ENCODE measurements at regions of chr3 and their contacts with region 1.

Region 1: GRCh38 chr3:120245386-120245785 is 39.6 kb downstream of the GPR156 start:
- DNase-seq: no peak
- ATAC-seq: no peak
- H3K4me3 ChIP-seq: no peak overlapping the region
- H3K4me3 Mint-ChIP-seq: no peak overlapping the region
- H3K27ac ChIP-seq: no peak overlapping the region
- H3K27ac Mint-ChIP-seq: no peak overlapping the region
- H3K4me1 ChIP-seq: no peaks in the 10 kb centered on the region
- H3K4me1 Mint-ChIP-seq: no peaks in the 10 kb centered on the region
- H3K27me3 ChIP-seq: no peaks in the 10 kb centered on the region
- H3K27me3 Mint-ChIP-seq: peaks cover 38% of the 10 kb centered on the region
- CTCF ChIP-seq: no peak

Region 2: DNA sequence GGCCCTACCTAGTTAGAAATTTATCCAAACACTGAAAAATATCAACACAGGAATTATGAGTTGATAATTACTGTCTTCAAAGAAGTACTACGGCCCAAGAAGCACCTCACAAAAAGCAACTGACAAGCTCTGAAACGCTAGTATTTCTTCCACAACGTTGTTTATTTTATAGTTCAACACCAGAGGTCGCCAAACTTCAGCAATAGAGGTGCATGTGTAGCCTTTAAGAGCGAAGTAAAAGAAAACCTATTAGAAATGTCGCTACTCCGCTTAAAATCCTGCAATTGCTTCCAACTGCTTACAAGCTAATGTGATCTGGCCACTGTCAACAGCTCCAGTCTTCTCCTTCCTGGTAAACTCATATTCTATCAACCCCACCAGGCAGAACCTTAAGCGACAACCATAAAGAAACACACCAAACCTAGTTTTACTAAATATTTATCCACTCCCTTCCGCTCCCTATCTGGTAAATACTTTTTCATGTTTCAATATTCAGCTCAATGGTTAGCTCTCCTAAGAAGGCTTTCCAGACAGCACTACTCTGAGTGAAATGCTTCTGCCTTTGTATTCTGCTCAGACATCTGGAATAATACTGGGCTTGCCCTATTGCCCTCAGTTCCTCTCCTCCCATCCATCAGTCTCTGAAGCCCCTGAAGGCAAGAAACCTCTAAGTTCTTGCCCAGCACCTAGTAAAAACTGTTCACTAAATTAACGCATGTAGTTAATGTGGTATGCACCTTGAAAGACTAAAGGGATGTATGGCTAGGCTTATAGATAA is 353.3 kb before region 1 on chr3:
- CTCF ChIA-PET with region 1: no interaction called
- POLR2A ChIA-PET with region 1: no interaction called
- intact Hi-C with region 1: loop called (anchors 1 to 5 kb)
- DNase-seq: peak in 13 of 14 experiments; percentile 2 to 79 (median 20)
- ATAC-seq: peak; percentile 81
- H3K4me3 ChIP-seq: no peak overlapping the region
- H3K4me3 Mint-ChIP-seq: no peak overlapping the region
- H3K27ac ChIP-seq: no peak overlapping the region
- H3K27ac Mint-ChIP-seq: peak overlapping the region; percentile 53
- H3K4me1 ChIP-seq: no peaks in the 10 kb centered on the region
- H3K4me1 Mint-ChIP-seq: peaks cover 20% of the 10 kb centered on the region
- H3K27me3 ChIP-seq: no peaks in the 10 kb centered on the region
- H3K27me3 Mint-ChIP-seq: no peaks in the 10 kb centered on the region
- CTCF ChIP-seq: peak; percentile 84

Region 3: DNA sequence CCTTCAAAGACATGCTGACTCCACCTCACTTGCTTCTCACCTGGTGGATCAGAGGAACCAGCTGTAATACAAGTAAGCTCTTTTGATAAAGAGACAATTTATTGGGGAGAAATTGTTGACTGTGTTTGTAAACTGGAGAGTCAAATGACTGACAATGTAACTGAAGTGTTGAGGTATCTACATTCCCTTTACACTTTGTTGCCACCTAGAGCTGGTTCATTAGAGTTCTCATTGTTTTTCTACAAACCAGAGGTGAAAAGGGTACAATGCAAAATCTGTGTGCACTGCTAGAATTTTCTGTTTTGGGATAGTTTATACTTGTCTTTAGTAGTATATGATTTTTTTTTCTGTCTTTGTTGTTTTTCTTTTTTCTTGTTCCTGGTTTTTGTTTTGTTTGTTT is 112.4 kb after region 1 on chr3:
- CTCF ChIA-PET with region 1: interaction called, 4 read pairs
- POLR2A ChIA-PET with region 1: no interaction called
- intact Hi-C with region 1: loop called (anchors 2 to 10 kb)
- DNase-seq: peak in 2 of 14 experiments; percentile 12 to 19
- ATAC-seq: peak; percentile 41
- H3K4me3 ChIP-seq: no peak overlapping the region
- H3K4me3 Mint-ChIP-seq: no peak overlapping the region
- H3K27ac ChIP-seq: no peak overlapping the region
- H3K27ac Mint-ChIP-seq: no peak overlapping the region
- H3K4me1 ChIP-seq: no peaks in the 10 kb centered on the region
- H3K4me1 Mint-ChIP-seq: no peaks in the 10 kb centered on the region
- H3K27me3 ChIP-seq: peaks cover 0 to 5% of the 10 kb centered on the region in 2 experiments
- H3K27me3 Mint-ChIP-seq: peaks cover 36% of the 10 kb centered on the region
- CTCF ChIP-seq: peak; percentile 24

Region 4: DNA sequence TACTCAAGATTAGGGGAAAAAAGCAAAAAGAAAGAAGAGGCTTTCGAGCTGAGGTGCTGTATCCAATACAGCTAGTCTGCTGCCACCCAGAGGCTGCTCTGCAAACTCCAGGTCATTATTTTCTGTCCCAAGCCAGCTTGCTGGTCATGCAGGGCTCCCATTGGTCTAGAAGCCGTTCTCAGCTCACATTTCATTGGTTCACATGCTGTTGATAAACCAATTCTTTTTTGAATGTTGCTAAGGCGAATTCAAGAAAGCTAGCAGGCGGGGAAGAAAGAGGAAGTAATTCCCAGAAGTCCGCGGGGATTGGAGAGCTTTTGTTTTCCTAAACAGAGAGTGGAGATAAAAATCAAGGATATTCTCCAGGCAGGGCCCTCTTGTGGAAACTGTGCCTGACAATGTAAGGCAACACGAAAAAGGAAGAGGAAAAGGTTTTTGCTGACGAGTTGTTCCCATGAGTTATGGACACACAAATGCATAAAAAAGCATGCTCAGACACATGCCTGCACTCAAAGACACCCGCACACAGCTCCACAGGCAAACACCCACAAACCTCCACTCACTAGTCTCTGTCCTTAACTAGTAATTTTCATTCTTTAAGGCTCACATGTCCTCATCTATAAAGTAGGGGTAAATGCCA is 172.0 kb after region 1 on chr3:
- CTCF ChIA-PET with region 1: interaction called, 24 read pairs
- POLR2A ChIA-PET with region 1: interaction called, 8 read pairs
- intact Hi-C with region 1: loop called (anchors 1 kb)
- DNase-seq: peak; percentile 69 to 91 (median 76)
- ATAC-seq: peak; percentile 99
- H3K4me3 ChIP-seq: peak overlapping the region; percentile 51
- H3K4me3 Mint-ChIP-seq: peak overlapping the region; percentile 77
- H3K27ac ChIP-seq: no peak overlapping the region
- H3K27ac Mint-ChIP-seq: no peak overlapping the region
- H3K4me1 ChIP-seq: peaks cover 18% of the 10 kb centered on the region
- H3K4me1 Mint-ChIP-seq: peaks cover 14% of the 10 kb centered on the region
- H3K27me3 ChIP-seq: no peaks in the 10 kb centered on the region
- H3K27me3 Mint-ChIP-seq: peaks cover 5% of the 10 kb centered on the region
- CTCF ChIP-seq: peak; percentile 87

Region 5: GRCh38 chr3:120506828-120507774 is 261.7 kb after region 1 on chr3:
- CTCF ChIA-PET with region 1: no interaction called
- POLR2A ChIA-PET with region 1: no interaction called
- intact Hi-C with region 1: no loop called
- DNase-seq: peak in 3 of 14 experiments; percentile 13 to 28 (median 15)
- ATAC-seq: no peak
- H3K4me3 ChIP-seq: no peak overlapping the region
- H3K4me3 Mint-ChIP-seq: no peak overlapping the region
- H3K27ac ChIP-seq: no peak overlapping the region
- H3K27ac Mint-ChIP-seq: no peak overlapping the region
- H3K4me1 ChIP-seq: no peaks in the 10 kb centered on the region
- H3K4me1 Mint-ChIP-seq: no peaks in the 10 kb centered on the region
- H3K27me3 ChIP-seq: peaks cover 7 to 8% of the 10 kb centered on the region in 2 experiments
- H3K27me3 Mint-ChIP-seq: peaks cover 55% of the 10 kb centered on the region
- CTCF ChIP-seq: peak; percentile 24

Region 6: DNA sequence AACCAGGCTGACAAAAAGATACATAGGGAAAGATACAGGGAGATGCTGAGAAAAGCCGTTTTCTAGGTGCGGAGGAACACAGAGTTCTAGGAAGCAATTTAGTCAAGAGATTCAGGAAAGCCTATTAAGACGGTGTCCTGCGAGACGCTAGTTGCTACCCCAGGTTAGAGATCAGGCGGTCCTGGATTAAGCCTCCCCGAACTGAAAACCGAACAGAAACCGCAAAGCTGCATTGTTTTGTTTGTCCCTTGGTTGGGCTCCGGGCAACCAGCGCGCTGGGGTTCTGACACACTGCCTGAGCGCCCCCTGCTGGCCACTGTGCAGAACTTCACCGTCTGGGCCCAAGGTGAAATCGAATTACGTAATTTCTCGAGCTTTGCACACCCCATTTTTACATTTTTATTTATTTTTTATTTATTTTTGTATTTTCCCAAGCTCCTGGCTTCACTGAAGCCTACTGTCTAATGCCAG is 313.4 kb after region 1 on chr3:
- CTCF ChIA-PET with region 1: interaction called, 19 read pairs
- POLR2A ChIA-PET with region 1: interaction called, 3 read pairs
- intact Hi-C with region 1: loop called in 1 of 2 experiments (anchors 1 kb)
- DNase-seq: peak; percentile 74 to 94 (median 86)
- ATAC-seq: peak; percentile 93
- H3K4me3 ChIP-seq: peak overlapping the region; percentile 43
- H3K4me3 Mint-ChIP-seq: peak overlapping the region; percentile 78
- H3K27ac ChIP-seq: no peak overlapping the region
- H3K27ac Mint-ChIP-seq: peak overlapping the region; percentile 63
- H3K4me1 ChIP-seq: peaks cover 15% of the 10 kb centered on the region
- H3K4me1 Mint-ChIP-seq: peaks cover 24% of the 10 kb centered on the region
- H3K27me3 ChIP-seq: no peaks in the 10 kb centered on the region
- H3K27me3 Mint-ChIP-seq: peaks cover 16% of the 10 kb centered on the region
- CTCF ChIP-seq: peak; percentile 98

Region 7: DNA sequence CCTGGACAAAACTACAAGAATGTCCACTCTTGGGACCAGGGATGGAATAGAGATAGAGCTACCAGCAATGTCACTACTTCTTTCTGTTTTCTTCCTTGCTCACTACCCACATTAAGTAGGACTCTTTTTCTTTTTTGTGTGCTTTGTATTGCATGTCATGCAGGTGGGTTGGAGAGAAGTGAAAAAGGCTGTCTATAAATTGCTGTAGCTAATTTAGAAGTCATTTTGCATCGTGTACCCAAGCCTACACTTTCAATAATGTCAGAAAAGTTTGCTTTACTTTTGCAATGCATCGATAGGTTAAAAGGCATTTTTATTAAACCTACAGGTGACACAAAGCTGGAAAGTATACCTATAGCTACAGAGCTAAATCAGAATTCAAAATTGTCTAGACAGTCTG is 556.1 kb after region 1 on chr3:
- CTCF ChIA-PET with region 1: no interaction called
- POLR2A ChIA-PET with region 1: no interaction called
- intact Hi-C with region 1: loop called in 1 of 2 experiments (anchors 2 kb)
- DNase-seq: no peak
- ATAC-seq: no peak
- H3K4me3 ChIP-seq: no peak overlapping the region
- H3K4me3 Mint-ChIP-seq: no peak overlapping the region
- H3K27ac ChIP-seq: no peak overlapping the region
- H3K27ac Mint-ChIP-seq: no peak overlapping the region
- H3K4me1 ChIP-seq: no peaks in the 10 kb centered on the region
- H3K4me1 Mint-ChIP-seq: no peaks in the 10 kb centered on the region
- H3K27me3 ChIP-seq: no peaks in the 10 kb centered on the region
- H3K27me3 Mint-ChIP-seq: peaks cover 8% of the 10 kb centered on the region
- CTCF ChIP-seq: no peak

Measured in CD4-positive, alpha-beta T cell (primary cell).